ENCODE measurements at regions of chr17 and their contacts with region 1.

Region 1: GRCh38 chr17:56715613-56716357 is 117.9 kb downstream of the C17orf67 start:
- DNase-seq: no peak
- H3K4me3 ChIP-seq: no peak overlapping the region
- CTCF ChIP-seq: peak; percentile 68

Region 2: GRCh38 chr17:56581635-56582627 is 133.9 kb before region 1 on chr17:
- CTCF ChIA-PET with region 1: interaction called, 13 read pairs
- POLR2A ChIA-PET with region 1: no interaction called
- DNase-seq: no peak
- H3K4me3 ChIP-seq: no peak overlapping the region
- CTCF ChIP-seq: no peak

Region 3: GRCh38 chr17:56679115-56679766 is 36.5 kb before region 1 on chr17:
- CTCF ChIA-PET with region 1: interaction called, 30 read pairs
- POLR2A ChIA-PET with region 1: no interaction called
- DNase-seq: no peak
- H3K4me3 ChIP-seq: peak overlapping the region; percentile 2
- CTCF ChIP-seq: peak; percentile 52

Region 4: DNA sequence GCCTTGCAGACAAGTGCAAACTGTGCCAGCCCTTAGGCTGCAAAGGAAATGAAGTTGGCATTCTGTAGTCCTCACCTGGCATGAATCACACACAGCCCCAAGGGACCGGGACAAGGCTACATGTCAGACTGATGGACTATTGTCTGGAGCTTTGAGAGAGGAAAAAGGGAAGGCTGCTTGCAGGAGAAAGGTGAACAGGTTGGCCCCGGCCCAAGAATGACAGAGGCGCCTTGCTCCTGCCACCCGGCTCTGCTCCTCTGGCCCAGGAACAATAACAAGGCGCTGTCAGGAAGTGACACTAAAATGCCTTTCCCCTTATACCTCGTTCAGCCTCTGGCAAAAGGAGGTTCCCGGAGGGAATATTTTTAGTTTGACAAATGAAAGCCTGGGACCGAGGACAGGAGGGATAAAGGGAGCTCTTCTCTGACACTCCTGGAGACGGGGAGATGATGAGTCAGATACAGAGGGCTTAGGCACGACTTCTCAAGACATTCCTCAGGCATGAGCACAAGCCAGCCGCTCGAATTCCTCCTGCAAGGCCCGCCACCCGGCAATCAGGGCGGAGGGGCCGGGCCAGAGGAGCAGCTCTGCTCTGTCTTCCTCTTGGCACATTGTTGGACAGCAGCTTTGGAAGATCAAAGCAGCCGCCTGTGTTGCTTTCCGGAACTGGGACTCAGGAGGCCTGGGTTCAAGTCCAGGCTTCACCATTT is 16.4 kb before region 1 on chr17:
- CTCF ChIA-PET with region 1: interaction called, 56 read pairs
- POLR2A ChIA-PET with region 1: interaction called, 3 read pairs
- DNase-seq: peak; percentile 93
- H3K4me3 ChIP-seq: peak overlapping the region; percentile 37
- CTCF ChIP-seq: no peak

Region 5: DNA sequence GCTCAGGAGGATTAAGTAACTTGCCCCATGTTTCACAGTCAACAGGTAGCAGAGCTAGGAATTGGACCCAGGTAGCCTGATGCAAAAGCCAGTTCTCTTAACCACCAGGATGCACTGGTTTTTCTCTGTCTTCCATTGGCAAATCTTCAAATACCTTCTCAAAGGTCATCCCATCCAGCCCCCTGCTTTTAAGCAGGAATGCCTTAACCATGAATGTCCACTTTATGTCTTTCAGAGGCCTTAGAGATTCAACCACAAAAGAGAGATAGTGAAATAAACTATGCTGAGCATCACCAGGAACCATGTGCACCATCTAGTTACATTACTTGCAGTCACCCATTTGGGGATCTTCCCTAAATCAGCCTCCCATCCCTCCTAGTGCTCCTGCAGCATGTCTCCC is 23.6 kb after region 1 on chr17:
- CTCF ChIA-PET with region 1: interaction called, 14 read pairs
- POLR2A ChIA-PET with region 1: no interaction called
- DNase-seq: no peak
- H3K4me3 ChIP-seq: no peak overlapping the region
- CTCF ChIP-seq: no peak

Region 6: GRCh38 chr17:56779898-56780733 is 64.3 kb after region 1 on chr17:
- CTCF ChIA-PET with region 1: interaction called, 29 read pairs
- POLR2A ChIA-PET with region 1: no interaction called
- DNase-seq: no peak
- H3K4me3 ChIP-seq: peak overlapping the region; percentile 53
- CTCF ChIP-seq: peak; percentile 96